Activated CD8-positive, alpha-beta T cell treated with anti-CD3 and anti-CD28 coated beads, Interleukin-2, amount 10 ng/mL, durations not matched to agents 7 days and 5 days (primary cell): ENCODE measurements at regions of chr10 and their contacts with region 1.

Region 1: DNA sequence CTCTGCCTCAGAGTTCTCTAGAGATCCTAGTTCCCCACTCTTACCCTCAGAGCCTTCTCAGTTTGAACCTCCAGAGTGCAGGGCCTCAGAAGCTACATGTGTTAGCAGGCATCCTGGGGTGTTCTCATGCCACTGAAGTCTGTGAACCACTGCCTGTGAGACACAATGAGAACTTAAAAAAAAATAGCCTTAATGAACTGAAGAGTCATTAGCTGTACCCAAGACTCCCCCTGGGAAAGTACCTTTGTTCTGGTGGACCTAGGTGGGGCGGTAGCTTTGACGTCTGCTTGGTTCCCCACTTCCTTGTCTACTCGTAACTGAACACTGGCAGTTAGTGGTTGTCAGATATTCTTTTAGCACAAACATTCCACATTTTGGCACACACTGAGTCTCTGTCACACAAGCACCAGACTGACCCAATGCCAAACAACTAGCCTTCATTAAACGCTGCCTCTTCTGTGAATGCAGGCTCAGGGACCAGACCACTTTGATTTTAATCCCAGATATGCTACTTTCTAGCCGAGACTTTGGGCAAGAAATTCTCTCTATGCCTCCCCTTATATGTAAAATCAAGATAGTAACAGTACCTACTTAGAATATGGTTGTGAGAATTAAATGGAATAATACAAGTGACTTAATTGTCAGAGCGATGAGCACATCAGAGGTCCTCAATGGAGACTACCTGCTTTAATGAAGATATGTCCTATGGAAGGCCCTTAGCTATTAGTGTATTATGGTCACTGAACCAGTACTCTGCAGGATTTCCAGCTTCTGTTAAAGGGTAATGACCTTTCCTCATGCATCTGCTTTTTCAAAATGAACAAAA is 75.3 kb upstream of the CC2D2B start:
- DNase-seq: peak; percentile 74
- ATAC-seq: peak; percentile 91
- H3K4me3 Mint-ChIP-seq: peak overlapping the region; percentile 70
- H3K27ac Mint-ChIP-seq: peak overlapping the region; percentile 96
- H3K4me1 Mint-ChIP-seq: peaks cover 69% of the 10 kb centered on the region
- H3K27me3 Mint-ChIP-seq: no peaks in the 10 kb centered on the region

Region 2: DNA sequence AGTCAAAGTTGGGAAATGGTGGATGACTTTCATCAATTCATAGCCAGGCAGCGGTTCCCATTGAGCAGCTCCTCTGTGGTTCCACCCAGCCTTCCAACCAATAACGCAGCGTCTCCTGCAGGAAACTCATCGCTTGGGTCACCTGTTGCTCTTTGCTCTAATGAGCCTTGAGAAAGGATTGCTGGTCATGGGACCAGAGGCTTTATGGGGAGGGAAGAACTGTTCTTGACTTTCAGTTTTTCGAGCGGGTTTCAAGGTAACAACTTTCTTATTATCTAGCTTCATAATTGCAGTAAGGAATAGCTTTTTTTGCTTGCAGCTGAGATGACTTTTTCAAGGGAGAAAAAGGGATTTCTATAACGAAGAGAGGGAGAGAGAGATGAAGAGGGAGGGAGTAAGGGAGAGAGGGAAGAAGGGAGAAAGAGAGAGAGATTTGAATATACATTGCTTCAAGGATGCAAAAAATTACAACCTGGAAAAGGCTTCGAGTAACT is 76.9 kb before region 1 on chr10:
- CTCF ChIA-PET with region 1: interaction called, 19 read pairs
- POLR2A ChIA-PET with region 1: interaction called, 27 read pairs
- DNase-seq: no peak
- ATAC-seq: no peak
- H3K4me3 Mint-ChIP-seq: peak overlapping the region; percentile 77
- H3K27ac Mint-ChIP-seq: peak overlapping the region; percentile 80
- H3K4me1 Mint-ChIP-seq: peaks cover 48% of the 10 kb centered on the region
- H3K27me3 Mint-ChIP-seq: peaks cover 14% of the 10 kb centered on the region

Region 3: GRCh38 chr10:95783741-95784140 is 48.7 kb before region 1 on chr10:
- CTCF ChIA-PET with region 1: interaction called, 76 read pairs
- POLR2A ChIA-PET with region 1: interaction called, 35 read pairs
- DNase-seq: no peak
- ATAC-seq: no peak
- H3K4me3 Mint-ChIP-seq: no peak overlapping the region
- H3K27ac Mint-ChIP-seq: no peak overlapping the region
- H3K4me1 Mint-ChIP-seq: peaks cover 69% of the 10 kb centered on the region
- H3K27me3 Mint-ChIP-seq: peaks cover 20% of the 10 kb centered on the region

Region 4: GRCh38 chr10:95792874-95793285 is 39.5 kb before region 1 on chr10:
- CTCF ChIA-PET with region 1: interaction called, 76 read pairs
- POLR2A ChIA-PET with region 1: interaction called, 35 read pairs
- DNase-seq: no peak
- ATAC-seq: no peak
- H3K4me3 Mint-ChIP-seq: no peak overlapping the region
- H3K27ac Mint-ChIP-seq: peak overlapping the region; percentile 86
- H3K4me1 Mint-ChIP-seq: peaks cover 80% of the 10 kb centered on the region
- H3K27me3 Mint-ChIP-seq: peaks cover 3% of the 10 kb centered on the region

Region 5: DNA sequence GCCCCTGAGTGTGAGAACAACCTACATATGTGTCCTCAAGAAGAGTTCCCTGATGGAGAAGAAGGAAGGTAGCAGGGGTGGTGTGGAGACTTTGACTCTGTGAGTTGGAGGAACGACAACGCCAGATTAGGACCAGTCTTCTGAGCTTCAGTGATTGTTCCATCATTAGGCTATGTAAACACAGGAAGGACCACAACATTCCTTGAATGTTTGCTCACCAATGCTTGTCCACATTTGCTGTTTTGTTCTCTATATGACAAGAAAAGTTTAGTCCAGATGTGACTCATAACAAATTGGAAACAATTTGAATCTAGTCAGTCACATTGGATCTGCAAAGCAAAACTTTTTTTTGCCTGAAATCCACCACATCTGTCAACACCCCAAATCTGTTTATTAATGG is 13.8 kb before region 1 on chr10:
- CTCF ChIA-PET with region 1: interaction called, 10 read pairs
- POLR2A ChIA-PET with region 1: interaction called, 14 read pairs
- DNase-seq: no peak
- ATAC-seq: no peak
- H3K4me3 Mint-ChIP-seq: no peak overlapping the region
- H3K27ac Mint-ChIP-seq: no peak overlapping the region
- H3K4me1 Mint-ChIP-seq: peaks cover 37% of the 10 kb centered on the region
- H3K27me3 Mint-ChIP-seq: peaks cover 21% of the 10 kb centered on the region